ENCODE measurements at regions of chr17 and their contacts with region 1.

Region 1: GRCh38 chr17:721539-721934 is 6.9 kb upstream of the VPS53 start:
- DNase-seq: peak; percentile 93
- H3K4me3 ChIP-seq: peak overlapping the region in 1 of 3 experiments; percentile 14
- H3K27ac ChIP-seq: peak overlapping the region; percentile 89
- H3K4me1 ChIP-seq: peaks cover 11% of the 10 kb centered on the region
- H3K27me3 ChIP-seq: no peaks in the 10 kb centered on the region
- CTCF ChIP-seq: no peak

Region 2: DNA sequence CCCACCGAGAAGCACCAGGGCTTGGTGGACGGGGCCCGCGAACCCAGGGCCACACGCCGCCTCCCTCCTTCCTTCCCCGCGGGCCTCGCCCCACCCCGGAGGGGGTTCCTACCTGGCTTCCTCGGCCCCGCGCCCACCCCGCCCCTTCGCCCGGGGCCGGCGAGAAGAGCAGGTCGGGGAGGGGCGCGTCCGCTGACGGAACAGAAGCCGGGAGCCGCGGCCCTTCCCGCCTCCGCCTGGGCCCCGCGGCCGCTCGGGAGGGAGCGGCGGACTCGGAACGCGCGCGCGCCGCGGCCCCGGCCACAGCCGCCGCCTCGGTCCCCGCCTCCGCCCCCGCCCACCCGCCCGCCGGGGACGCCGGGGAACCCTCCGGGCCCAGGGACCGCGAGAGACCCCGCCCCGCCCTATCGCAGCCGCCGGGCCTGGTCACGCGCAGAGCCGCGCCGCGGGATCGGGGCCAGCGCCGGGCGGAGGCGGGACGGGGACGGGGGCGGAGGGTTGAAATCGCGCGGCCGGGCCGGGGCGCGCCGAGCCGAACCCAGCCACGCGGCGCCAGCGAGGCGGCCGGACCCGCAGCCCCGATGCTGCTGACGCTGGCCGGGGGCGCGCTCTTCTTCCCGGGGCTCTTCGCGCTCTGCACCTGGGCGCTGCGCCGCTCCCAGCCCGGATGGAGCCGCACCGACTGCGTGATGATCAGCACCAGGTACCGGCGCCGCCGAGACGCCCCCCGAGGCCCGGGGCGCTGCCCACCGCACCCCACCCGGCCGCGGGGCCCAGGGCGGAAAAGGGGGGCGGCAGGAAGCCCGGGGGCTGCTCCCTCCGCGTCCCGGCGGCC is 10.7 kb after region 1 on chr17 and contains the start of gene TLCD3A:
- CTCF ChIA-PET with region 1: no interaction called
- dilution Hi-C with region 1: no loop called
- in situ Hi-C with region 1: no loop called
- intact Hi-C with region 1: loop called (anchors 1 kb)
- DNase-seq: peak; percentile 75
- H3K4me3 ChIP-seq: peak within 1 kb of the TSS; percentile 55 to 85 (median 79)
- H3K27ac ChIP-seq: peak within 1 kb of the TSS; percentile 98
- H3K4me1 ChIP-seq: peaks cover 44% of the 10 kb centered on the region
- H3K27me3 ChIP-seq: no peaks in the 10 kb centered on the region
- CTCF ChIP-seq: no peak
- total RNA-seq, gene TLCD3A: 24.2 to 41.1 TPM

Region 3: GRCh38 chr17:869567-870525 is 148.3 kb after region 1 on chr17:
- CTCF ChIA-PET with region 1: no interaction called
- dilution Hi-C with region 1: no loop called
- in situ Hi-C with region 1: no loop called
- intact Hi-C with region 1: no loop called
- DNase-seq: peak; percentile 96
- H3K4me3 ChIP-seq: peak overlapping the region; percentile 14 to 36 (median 30)
- H3K27ac ChIP-seq: peak overlapping the region; percentile 89
- H3K4me1 ChIP-seq: peaks cover 17% of the 10 kb centered on the region
- H3K27me3 ChIP-seq: no peaks in the 10 kb centered on the region
- CTCF ChIP-seq: peak in 1 of 2 donors; percentile 8